ENCODE measurements at regions of chr13 and their contacts with region 1.

Region 1: GRCh38 chr13:33542283-33543088 is 256.9 kb upstream of the STARD13 start:
- DNase-seq: peak; percentile 99 to 100 (median 99)
- H3K4me3 ChIP-seq: peak overlapping the region; percentile 75 to 82
- H3K4me3 Mint-ChIP-seq: peak overlapping the region; percentile 92 to 98 (median 94)
- H3K27ac ChIP-seq: peak overlapping the region; percentile 96
- H3K27ac Mint-ChIP-seq: peak overlapping the region; percentile 98 to 100 (median 98)
- H3K4me1 ChIP-seq: peaks cover 43% of the 10 kb centered on the region
- H3K4me1 Mint-ChIP-seq: peaks cover 28 to 53% (median 39%) of the 10 kb centered on the region in 4 donors
- H3K27me3 ChIP-seq: no peaks in the 10 kb centered on the region
- H3K27me3 Mint-ChIP-seq: no peaks in the 10 kb centered on the region

Region 2: GRCh38 chr13:32315238-32316027 is 1227.1 kb before region 1 on chr13 and contains the starts of genes BRCA2 and ZAR1L:
- CTCF ChIA-PET with region 1: interaction called, 3 read pairs
- POLR2A ChIA-PET with region 1: interaction called, 12 read pairs
- intact Hi-C with region 1: loop called (anchors 1 kb)
- DNase-seq: peak; percentile 85 to 89 (median 87)
- H3K4me3 ChIP-seq: peak within 1 kb of the TSS; percentile 59 to 81
- H3K4me3 Mint-ChIP-seq: peak within 1 kb of the TSS; percentile 91 to 100 (median 96)
- H3K27ac ChIP-seq: peak within 1 kb of the TSS; percentile 99
- H3K27ac Mint-ChIP-seq: peak within 1 kb of the TSS; percentile 98 to 100 (median 100)
- H3K4me1 ChIP-seq: peaks cover 16% of the 10 kb centered on the region
- H3K4me1 Mint-ChIP-seq: peaks cover 7 to 27% (median 11%) of the 10 kb centered on the region in 4 donors
- H3K27me3 ChIP-seq: no peaks in the 10 kb centered on the region
- H3K27me3 Mint-ChIP-seq: no peaks in the 10 kb centered on the region
- total RNA-seq, gene BRCA2: 3.2 TPM
- total RNA-seq, gene ZAR1L: not detected

Region 3: GRCh38 chr13:32538621-32539246 is 1003.8 kb before region 1 on chr13 and contains the start of gene N4BP2L2:
- CTCF ChIA-PET with region 1: no interaction called
- POLR2A ChIA-PET with region 1: interaction called, 9 read pairs
- intact Hi-C with region 1: loop called (anchors 1 kb)
- DNase-seq: peak; percentile 89 to 95 (median 91)
- H3K4me3 ChIP-seq: peak within 1 kb of the TSS; percentile 87 to 100
- H3K4me3 Mint-ChIP-seq: peak within 1 kb of the TSS; percentile 95 to 100 (median 99)
- H3K27ac ChIP-seq: peak within 1 kb of the TSS; percentile 99
- H3K27ac Mint-ChIP-seq: peak within 1 kb of the TSS; percentile 99 to 100 (median 100)
- H3K4me1 ChIP-seq: peaks cover 39% of the 10 kb centered on the region
- H3K4me1 Mint-ChIP-seq: peaks cover 32 to 57% (median 44%) of the 10 kb centered on the region in 4 donors
- H3K27me3 ChIP-seq: no peaks in the 10 kb centered on the region
- H3K27me3 Mint-ChIP-seq: no peaks in the 10 kb centered on the region
- total RNA-seq, gene N4BP2L2: 337 to 351 TPM

Region 4: DNA sequence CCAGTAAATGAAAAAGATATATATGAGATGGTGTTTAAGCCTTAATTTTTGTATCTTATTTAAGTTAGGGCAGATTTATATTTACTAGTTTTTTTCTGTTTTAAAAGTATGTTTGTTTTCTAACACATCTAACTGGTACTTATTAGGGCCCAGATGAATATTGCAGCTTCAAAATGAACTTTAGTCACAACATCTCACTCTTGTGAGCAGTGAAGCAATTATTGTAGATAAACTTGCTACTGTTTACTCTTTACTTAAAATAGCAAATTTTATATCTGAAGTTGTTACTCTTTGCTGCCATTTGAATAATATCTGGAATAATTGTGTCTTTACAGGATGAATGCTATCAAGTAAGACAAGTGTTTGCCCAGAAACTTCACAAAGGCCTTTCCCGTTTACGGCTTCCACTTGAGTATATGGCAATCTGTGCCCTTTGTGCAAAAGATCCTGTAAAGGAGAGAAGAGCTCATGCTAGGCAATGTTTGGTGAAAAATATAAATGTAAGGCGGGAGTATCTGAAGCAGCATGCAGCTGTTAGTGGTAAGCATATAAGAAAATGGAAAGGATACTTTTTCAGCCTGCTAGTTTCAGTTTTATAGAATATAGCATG is 789.4 kb before region 1 on chr13:
- CTCF ChIA-PET with region 1: no interaction called
- POLR2A ChIA-PET with region 1: no interaction called
- intact Hi-C with region 1: no loop called
- DNase-seq: no peak
- H3K4me3 ChIP-seq: no peak overlapping the region
- H3K4me3 Mint-ChIP-seq: no peak overlapping the region
- H3K27ac ChIP-seq: no peak overlapping the region
- H3K27ac Mint-ChIP-seq: no peak overlapping the region
- H3K4me1 ChIP-seq: no peaks in the 10 kb centered on the region
- H3K4me1 Mint-ChIP-seq: peaks cover 0 to under 1% (median 0%) of the 10 kb centered on the region in 4 donors
- H3K27me3 ChIP-seq: no peaks in the 10 kb centered on the region
- H3K27me3 Mint-ChIP-seq: no peaks in the 10 kb centered on the region

Region 5: GRCh38 chr13:32840989-32841713 is 701.3 kb before region 1 on chr13:
- CTCF ChIA-PET with region 1: no interaction called
- POLR2A ChIA-PET with region 1: no interaction called
- intact Hi-C with region 1: no loop called
- DNase-seq: no peak
- H3K4me3 ChIP-seq: no peak overlapping the region
- H3K4me3 Mint-ChIP-seq: no peak overlapping the region
- H3K27ac ChIP-seq: no peak overlapping the region
- H3K27ac Mint-ChIP-seq: no peak overlapping the region
- H3K4me1 ChIP-seq: no peaks in the 10 kb centered on the region
- H3K4me1 Mint-ChIP-seq: no peaks in the 10 kb centered on the region
- H3K27me3 ChIP-seq: no peaks in the 10 kb centered on the region
- H3K27me3 Mint-ChIP-seq: peaks cover 2 to 5% of the 10 kb centered on the region in 2 donors

Region 6: GRCh38 chr13:33228648-33229445 is 313.6 kb before region 1 on chr13:
- CTCF ChIA-PET with region 1: interaction called, 17 read pairs
- POLR2A ChIA-PET with region 1: interaction called, 4 read pairs
- intact Hi-C with region 1: loop called (anchors 1 kb)
- DNase-seq: peak in 4 of 5 donors; percentile 38 to 48 (median 42)
- H3K4me3 ChIP-seq: no peak overlapping the region
- H3K4me3 Mint-ChIP-seq: peak overlapping the region in 1 of 8 donors; percentile 26
- H3K27ac ChIP-seq: no peak overlapping the region
- H3K27ac Mint-ChIP-seq: peak overlapping the region in 1 of 7 donors; percentile 7
- H3K4me1 ChIP-seq: peaks cover 3% of the 10 kb centered on the region
- H3K4me1 Mint-ChIP-seq: peaks cover 0 to 5% (median 1%) of the 10 kb centered on the region in 4 donors
- H3K27me3 ChIP-seq: no peaks in the 10 kb centered on the region
- H3K27me3 Mint-ChIP-seq: peaks cover 0 to 4% of the 10 kb centered on the region in 2 donors

Region 7: GRCh38 chr13:33678906-33679657 is 136.6 kb after region 1 on chr13:
- CTCF ChIA-PET with region 1: interaction called, 7 read pairs
- POLR2A ChIA-PET with region 1: interaction called, 15 read pairs
- intact Hi-C with region 1: loop called (anchors 5 kb)
- DNase-seq: peak; percentile 34 to 87 (median 44)
- H3K4me3 ChIP-seq: peak overlapping the region; percentile 19 to 36
- H3K4me3 Mint-ChIP-seq: peak overlapping the region; percentile 75 to 81 (median 77)
- H3K27ac ChIP-seq: peak overlapping the region; percentile 39
- H3K27ac Mint-ChIP-seq: peak overlapping the region; percentile 68 to 90 (median 84)
- H3K4me1 ChIP-seq: peaks cover 17% of the 10 kb centered on the region
- H3K4me1 Mint-ChIP-seq: peaks cover 15 to 40% (median 25%) of the 10 kb centered on the region in 4 donors
- H3K27me3 ChIP-seq: no peaks in the 10 kb centered on the region
- H3K27me3 Mint-ChIP-seq: no peaks in the 10 kb centered on the region

Region 8: DNA sequence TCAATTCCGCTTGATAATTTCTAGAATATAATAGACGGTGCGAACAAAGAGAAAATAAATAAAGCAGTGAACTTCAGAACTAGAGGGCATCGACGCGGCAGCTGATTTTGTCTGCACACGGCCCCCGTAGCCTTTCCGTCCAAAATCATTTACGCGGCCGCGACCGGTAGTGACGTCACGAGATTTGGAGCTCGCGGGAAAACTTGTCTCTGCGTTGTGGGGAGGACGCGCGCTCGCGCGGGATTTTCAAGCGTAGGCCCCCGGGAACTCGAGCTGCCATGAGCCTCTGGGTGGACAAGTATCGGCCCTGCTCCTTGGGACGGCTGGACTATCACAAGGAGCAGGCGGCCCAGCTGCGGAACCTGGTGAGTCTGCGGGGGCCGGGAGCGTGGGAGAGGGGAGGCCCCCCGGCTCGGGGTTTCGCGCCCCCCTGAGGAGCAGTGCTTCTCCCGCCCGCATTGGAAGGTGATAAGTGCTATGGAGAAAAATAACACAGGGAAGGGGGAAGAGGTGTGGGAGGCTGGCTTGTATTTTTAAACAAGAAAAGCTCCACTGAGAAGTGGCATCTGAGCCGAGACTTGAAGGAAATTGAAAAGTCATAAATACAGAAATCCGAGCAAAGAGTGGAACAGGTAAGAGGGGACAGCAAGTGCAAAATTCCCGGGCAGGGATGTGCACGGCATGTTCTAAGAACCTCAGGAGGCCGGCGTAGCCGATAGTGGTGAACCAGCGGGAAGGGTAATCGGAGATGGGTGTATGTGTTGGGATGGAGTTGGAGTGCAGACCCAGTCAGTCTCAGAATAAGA is 275.6 kb after region 1 on chr13 and contains the start of gene RFC3:
- CTCF ChIA-PET with region 1: interaction called, 7 read pairs
- POLR2A ChIA-PET with region 1: interaction called, 14 read pairs
- intact Hi-C with region 1: loop called (anchors 1 kb)
- DNase-seq: peak; percentile 88 to 91 (median 89)
- H3K4me3 ChIP-seq: peak within 1 kb of the TSS; percentile 53 to 95
- H3K4me3 Mint-ChIP-seq: peak within 1 kb of the TSS; percentile 89 to 97 (median 91)
- H3K27ac ChIP-seq: peak within 1 kb of the TSS; percentile 55
- H3K27ac Mint-ChIP-seq: peak within 1 kb of the TSS; percentile 90 to 98 (median 94)
- H3K4me1 ChIP-seq: peaks cover 14% of the 10 kb centered on the region
- H3K4me1 Mint-ChIP-seq: peaks cover 6 to 21% (median 12%) of the 10 kb centered on the region in 4 donors
- H3K27me3 ChIP-seq: no peaks in the 10 kb centered on the region
- H3K27me3 Mint-ChIP-seq: peaks cover 0 to 1% of the 10 kb centered on the region in 2 donors
- total RNA-seq, gene RFC3: 4.9 to 5.1 TPM